HepG2 (cell line): ENCODE measurements at regions of chr10 and their contacts with region 1.

Region 1: GRCh38 chr10:3036155-3037021 is 31.0 kb upstream of the PFKP start:
- DNase-seq: no peak
- ATAC-seq: no peak
- H3K4me3 ChIP-seq: no peak overlapping the region
- H3K27ac ChIP-seq: no peak overlapping the region
- H3K4me1 ChIP-seq: no peaks in the 10 kb centered on the region
- H3K27me3 ChIP-seq: no peaks in the 10 kb centered on the region; a peak in 1 of 5 replicates
- CTCF ChIP-seq: no peak
- EP300 ChIP-seq: no peak
- POLR2A ChIP-seq: no peak
- RAD21 ChIP-seq: no peak

Region 2: GRCh38 chr10:1809139-1809741 is 1227.1 kb before region 1 on chr10:
- CTCF ChIA-PET with region 1: no interaction called
- POLR2A ChIA-PET with region 1: no interaction called
- in situ Hi-C with region 1: no loop called
- intact Hi-C with region 1: loop called (anchors 5 kb)
- DNase-seq: no peak
- ATAC-seq: no peak
- H3K4me3 ChIP-seq: no peak overlapping the region
- H3K27ac ChIP-seq: no peak overlapping the region
- H3K4me1 ChIP-seq: no peaks in the 10 kb centered on the region
- H3K27me3 ChIP-seq: peaks cover 0 to 6% of the 10 kb centered on the region in 2 experiments; a peak in 1 of 5 replicates
- CTCF ChIP-seq: no peak
- EP300 ChIP-seq: no peak
- POLR2A ChIP-seq: no peak
- RAD21 ChIP-seq: no peak

Region 3: DNA sequence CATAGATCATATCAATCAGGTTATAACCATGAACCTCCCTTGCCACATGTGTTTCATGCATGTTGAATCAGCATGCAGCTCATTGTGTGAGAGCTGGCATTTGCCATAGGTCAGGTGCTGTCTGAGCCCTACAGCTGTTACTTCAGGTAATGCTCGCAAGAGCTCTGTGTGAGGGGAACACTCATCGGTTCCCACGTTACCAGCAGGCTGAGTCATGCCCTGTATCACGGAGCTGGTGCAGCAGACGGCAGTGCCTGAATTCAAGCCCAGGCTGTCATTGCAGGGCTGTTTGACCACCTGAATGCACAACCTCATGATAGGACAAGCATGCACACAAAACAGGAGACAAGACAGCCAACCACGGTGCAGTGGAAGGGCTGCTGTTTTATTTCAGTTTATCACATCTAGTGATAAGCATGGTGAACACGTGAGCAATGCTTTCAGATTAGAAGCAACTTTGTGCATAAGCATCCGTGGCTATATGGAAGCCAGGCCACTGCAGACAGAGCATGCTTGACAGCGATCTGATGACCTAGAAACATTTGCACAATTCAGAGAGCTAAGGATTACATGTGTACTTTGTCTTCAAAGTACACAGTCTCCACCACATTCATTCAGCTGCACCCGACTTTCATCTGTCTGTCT is 25.4 kb before region 1 on chr10:
- CTCF ChIA-PET with region 1: no interaction called
- POLR2A ChIA-PET with region 1: no interaction called
- in situ Hi-C with region 1: no loop called
- intact Hi-C with region 1: no loop called
- DNase-seq: peak; percentile 21
- ATAC-seq: peak; percentile 64
- H3K4me3 ChIP-seq: no peak overlapping the region
- H3K27ac ChIP-seq: no peak overlapping the region
- H3K4me1 ChIP-seq: peaks cover 7% of the 10 kb centered on the region; the same call in 1 of the 2 replicates
- H3K27me3 ChIP-seq: peaks cover 2 to 23% of the 10 kb centered on the region in 2 experiments; a peak in 3 of 5 replicates
- CTCF ChIP-seq: no peak
- EP300 ChIP-seq: no peak
- POLR2A ChIP-seq: no peak
- RAD21 ChIP-seq: no peak

Region 4: GRCh38 chr10:3099291-3100092 is 63.1 kb after region 1 on chr10:
- CTCF ChIA-PET with region 1: no interaction called
- POLR2A ChIA-PET with region 1: no interaction called
- in situ Hi-C with region 1: no loop called
- intact Hi-C with region 1: no loop called
- DNase-seq: peak; percentile 45
- ATAC-seq: no peak
- H3K4me3 ChIP-seq: no peak overlapping the region
- H3K27ac ChIP-seq: no peak overlapping the region
- H3K4me1 ChIP-seq: peaks cover 43% of the 10 kb centered on the region
- H3K27me3 ChIP-seq: no peaks in the 10 kb centered on the region; a peak in 1 of 5 replicates
- CTCF ChIP-seq: no peak
- EP300 ChIP-seq: no peak
- POLR2A ChIP-seq: no peak
- RAD21 ChIP-seq: no peak